ENCODE measurements at regions of chr13 and their contacts with region 1.

Region 1: GRCh38 chr13:66532146-66532545 is 698.0 kb downstream of the PCDH9 start:
- DNase-seq: no peak
- H3K4me3 ChIP-seq: no peak overlapping the region
- H3K27ac ChIP-seq: no peak overlapping the region
- H3K4me1 ChIP-seq: no peaks in the 10 kb centered on the region
- H3K27me3 ChIP-seq: no peaks in the 10 kb centered on the region
- CTCF ChIP-seq: no peak
- EP300 ChIP-seq: no peak
- POLR2A ChIP-seq: no peak

Region 2: GRCh38 chr13:66483712-66484111 is 48.4 kb before region 1 on chr13:
- in situ Hi-C with region 1: no loop called
- intact Hi-C with region 1: loop called (anchors 10 kb)
- DNase-seq: no peak
- H3K4me3 ChIP-seq: no peak overlapping the region
- H3K27ac ChIP-seq: no peak overlapping the region
- H3K4me1 ChIP-seq: no peaks in the 10 kb centered on the region
- H3K27me3 ChIP-seq: no peaks in the 10 kb centered on the region
- CTCF ChIP-seq: no peak
- EP300 ChIP-seq: no peak
- POLR2A ChIP-seq: no peak

Region 3: GRCh38 chr13:66586489-66586888 is 54.3 kb after region 1 on chr13:
- in situ Hi-C with region 1: no loop called
- intact Hi-C with region 1: no loop called
- DNase-seq: no peak
- H3K4me3 ChIP-seq: no peak overlapping the region
- H3K27ac ChIP-seq: no peak overlapping the region
- H3K4me1 ChIP-seq: no peaks in the 10 kb centered on the region
- H3K27me3 ChIP-seq: no peaks in the 10 kb centered on the region
- CTCF ChIP-seq: no peak
- EP300 ChIP-seq: no peak
- POLR2A ChIP-seq: no peak

Region 4: DNA sequence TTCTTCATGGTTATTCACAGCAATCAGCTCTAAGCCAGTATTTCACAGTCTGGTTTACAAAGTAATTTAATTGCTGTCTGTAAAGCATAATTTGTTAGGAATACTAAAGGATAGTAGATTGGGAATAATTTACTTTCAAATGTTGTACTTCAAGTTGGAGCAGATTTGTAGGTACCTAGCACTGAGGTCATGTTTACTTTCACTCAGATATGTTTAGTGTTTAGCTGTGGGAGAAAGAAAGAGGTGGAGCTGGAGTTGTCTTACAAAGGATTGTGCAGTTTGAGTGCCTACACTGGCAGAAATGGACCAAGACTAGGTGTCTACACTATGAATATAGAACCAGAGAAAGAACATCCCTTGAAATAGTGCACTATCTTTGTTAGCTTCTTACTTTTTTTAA is 233.4 kb after region 1 on chr13:
- in situ Hi-C with region 1: no loop called
- intact Hi-C with region 1: no loop called
- DNase-seq: no peak
- H3K4me3 ChIP-seq: no peak overlapping the region
- H3K27ac ChIP-seq: no peak overlapping the region
- H3K4me1 ChIP-seq: no peaks in the 10 kb centered on the region
- H3K27me3 ChIP-seq: no peaks in the 10 kb centered on the region
- CTCF ChIP-seq: no peak
- EP300 ChIP-seq: no peak
- POLR2A ChIP-seq: no peak

Region 5: DNA sequence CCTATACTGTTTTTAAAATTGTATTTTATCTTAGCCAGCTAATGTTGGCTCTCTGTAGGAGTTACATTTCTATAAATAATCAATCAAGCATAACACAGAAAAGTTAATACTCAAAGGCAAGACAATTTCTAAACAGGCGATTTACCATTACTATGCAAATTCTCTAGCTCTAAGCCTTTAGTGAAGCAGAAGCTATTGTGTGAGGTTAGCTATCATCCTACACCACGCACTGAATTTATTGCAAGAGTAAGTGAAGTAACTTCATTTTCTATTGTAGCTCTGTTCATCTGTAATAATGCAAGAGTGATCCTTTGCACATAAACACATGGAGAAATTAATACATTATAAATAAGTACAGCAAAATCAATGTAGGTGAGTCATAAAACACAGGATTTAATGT is 258.7 kb after region 1 on chr13:
- in situ Hi-C with region 1: no loop called
- intact Hi-C with region 1: no loop called
- DNase-seq: no peak
- H3K4me3 ChIP-seq: no peak overlapping the region
- H3K27ac ChIP-seq: no peak overlapping the region
- H3K4me1 ChIP-seq: no peaks in the 10 kb centered on the region
- H3K27me3 ChIP-seq: no peaks in the 10 kb centered on the region
- CTCF ChIP-seq: no peak
- EP300 ChIP-seq: no peak
- POLR2A ChIP-seq: no peak

Region 6: GRCh38 chr13:66972659-66973058 is 440.5 kb after region 1 on chr13:
- in situ Hi-C with region 1: no loop called
- intact Hi-C with region 1: no loop called
- DNase-seq: no peak
- H3K4me3 ChIP-seq: no peak overlapping the region
- H3K27ac ChIP-seq: no peak overlapping the region
- H3K4me1 ChIP-seq: no peaks in the 10 kb centered on the region
- H3K27me3 ChIP-seq: no peaks in the 10 kb centered on the region
- CTCF ChIP-seq: no peak
- EP300 ChIP-seq: no peak
- POLR2A ChIP-seq: no peak